ENCODE measurements at regions of chr16 and their contacts with region 1.

Region 1: GRCh38 chr16:84562174-84562815 is 55.6 kb downstream of the COTL1 start:
- DNase-seq: no peak
- ATAC-seq: no peak
- H3K4me3 ChIP-seq: no peak overlapping the region
- H3K27ac ChIP-seq: no peak overlapping the region
- H3K4me1 ChIP-seq: no peaks in the 10 kb centered on the region
- H3K27me3 ChIP-seq: no peaks in the 10 kb centered on the region
- CTCF ChIP-seq: no peak

Region 2: GRCh38 chr16:84504420-84505248 is 57.7 kb before region 1 on chr16 and contains the start of gene MEAK7:
- CTCF ChIA-PET with region 1: no interaction called
- POLR2A ChIA-PET with region 1: no interaction called
- in situ Hi-C with region 1: no loop called
- intact Hi-C with region 1: no loop called
- DNase-seq: peak; percentile 85
- ATAC-seq: peak; percentile 94
- H3K4me3 ChIP-seq: peak within 1 kb of the TSS; percentile 63 to 73
- H3K27ac ChIP-seq: peak within 1 kb of the TSS; percentile 75
- H3K4me1 ChIP-seq: peaks cover 27% of the 10 kb centered on the region
- H3K27me3 ChIP-seq: no peaks in the 10 kb centered on the region
- CTCF ChIP-seq: no peak
- total RNA-seq, gene MEAK7: 17.2 TPM

Region 3: DNA sequence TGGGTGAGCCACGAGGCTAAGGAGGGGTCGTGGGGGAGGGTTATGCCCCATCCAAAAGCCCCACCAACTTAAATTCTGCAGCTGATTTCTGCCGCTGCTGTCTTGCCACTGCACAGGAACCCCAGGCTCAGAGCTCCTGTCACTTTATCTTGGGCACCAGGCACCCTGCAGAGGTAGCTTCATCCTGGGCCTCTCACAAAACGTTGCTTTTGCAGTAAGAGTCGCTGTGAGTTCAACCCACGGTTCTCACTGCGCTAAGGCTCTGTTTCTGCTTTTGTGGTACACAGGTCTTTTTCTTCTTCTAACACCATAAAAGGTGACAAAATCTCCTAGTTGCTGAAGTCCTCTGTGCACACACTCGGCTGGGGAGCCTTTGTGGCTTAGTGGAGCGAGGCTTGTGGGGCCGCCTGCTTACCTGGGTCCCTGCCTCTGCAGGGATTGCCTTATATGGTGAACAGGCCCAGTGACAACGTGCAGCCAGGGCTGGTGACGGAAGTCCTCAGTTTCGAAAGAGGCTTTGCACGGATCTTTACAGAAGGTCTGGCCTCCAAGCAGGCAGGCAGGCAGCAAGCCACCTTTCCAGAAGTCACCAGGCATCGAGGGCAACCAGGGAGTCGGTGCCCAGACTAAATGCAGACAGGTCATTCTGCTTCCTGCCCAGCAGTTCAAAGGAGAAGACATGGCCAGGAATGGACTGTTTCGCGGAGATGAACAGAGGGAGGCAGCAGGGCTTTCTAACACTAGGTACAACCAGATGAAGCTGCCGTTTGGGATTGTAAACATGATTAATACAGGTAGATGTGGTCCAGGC is 47.4 kb before region 1 on chr16:
- CTCF ChIA-PET with region 1: no interaction called
- POLR2A ChIA-PET with region 1: no interaction called
- in situ Hi-C with region 1: no loop called
- intact Hi-C with region 1: no loop called
- DNase-seq: no peak
- ATAC-seq: 0 out of 2 replicates have a peak, but pooled peaks have one; percentile 3
- H3K4me3 ChIP-seq: no peak overlapping the region
- H3K27ac ChIP-seq: 0 out of 2 replicates have a peak overlapping the region, but pooled peaks have one; percentile 17
- H3K4me1 ChIP-seq: peaks cover 9% of the 10 kb centered on the region
- H3K27me3 ChIP-seq: no peaks in the 10 kb centered on the region
- CTCF ChIP-seq: no peak

Region 4: GRCh38 chr16:84548971-84549844 is 13.1 kb before region 1 on chr16:
- CTCF ChIA-PET with region 1: no interaction called
- POLR2A ChIA-PET with region 1: interaction called, 10 read pairs
- in situ Hi-C with region 1: no loop called
- intact Hi-C with region 1: no loop called
- DNase-seq: no peak
- ATAC-seq: no peak; the same call in 1 of the 2 replicates
- H3K4me3 ChIP-seq: no peak overlapping the region
- H3K27ac ChIP-seq: no peak overlapping the region
- H3K4me1 ChIP-seq: peaks cover 7% of the 10 kb centered on the region
- H3K27me3 ChIP-seq: no peaks in the 10 kb centered on the region
- CTCF ChIP-seq: no peak

Measured in Panc1 (cell line).